ENCODE measurements at regions of chr16 and their contacts with region 1.

Region 1: GRCh38 chr16:46555951-46556350 is 65.2 kb downstream of the SHCBP1 start:
- DNase-seq: no peak
- H3K4me3 Mint-ChIP-seq: no peak overlapping the region
- H3K27ac Mint-ChIP-seq: no peak overlapping the region
- H3K4me1 Mint-ChIP-seq: no peaks in the 10 kb centered on the region
- H3K27me3 Mint-ChIP-seq: no peaks in the 10 kb centered on the region

Region 2: DNA sequence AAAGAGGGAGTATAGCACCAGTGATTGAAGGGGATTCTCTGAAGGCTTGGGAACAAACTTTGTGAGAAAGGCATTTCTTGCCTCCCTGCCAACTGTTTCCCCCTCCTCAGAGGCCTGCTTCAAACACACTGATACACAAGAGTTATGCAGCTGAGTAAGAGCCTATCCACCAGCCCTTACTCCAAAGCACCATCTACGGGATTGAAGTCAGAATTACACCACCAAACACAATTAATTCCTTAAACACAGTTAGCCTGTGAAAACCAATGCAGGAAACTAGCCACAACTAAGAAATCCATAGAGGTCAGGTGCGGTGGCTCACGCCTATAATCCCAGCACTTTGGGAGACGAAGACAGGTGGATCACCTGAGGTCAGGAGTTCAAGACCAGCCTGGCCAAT is 73.1 kb before region 1 on chr16:
- CTCF ChIA-PET with region 1: no interaction called
- DNase-seq: no peak
- H3K4me3 Mint-ChIP-seq: no peak overlapping the region
- H3K27ac Mint-ChIP-seq: no peak overlapping the region
- H3K4me1 Mint-ChIP-seq: no peaks in the 10 kb centered on the region
- H3K27me3 Mint-ChIP-seq: no peaks in the 10 kb centered on the region

Region 3: DNA sequence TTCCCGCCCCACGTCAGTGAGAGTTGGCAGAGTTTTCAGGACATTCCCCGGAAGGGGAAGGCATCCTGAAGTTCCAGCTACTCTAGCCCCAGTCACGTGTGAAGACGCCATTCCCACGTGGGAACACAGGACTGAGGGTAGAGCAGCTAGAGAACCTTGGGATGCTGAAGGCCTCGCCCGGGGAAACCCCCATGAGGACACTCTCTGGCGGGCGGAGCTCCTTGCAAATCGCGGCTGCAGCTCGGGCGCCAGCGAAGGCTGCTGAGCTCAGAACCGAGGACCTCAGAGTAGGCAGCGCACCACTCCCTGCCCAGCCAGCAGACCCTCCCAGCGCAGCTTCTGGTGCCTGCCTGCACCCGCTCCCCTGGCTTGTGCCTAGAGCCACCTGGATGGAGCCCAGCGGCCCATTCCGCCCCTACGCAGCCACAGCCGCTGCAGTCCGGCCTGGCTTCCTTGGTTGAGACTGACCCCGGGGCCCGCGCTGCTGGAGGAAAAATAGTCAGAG is 13.3 kb after region 1 on chr16:
- CTCF ChIA-PET with region 1: no interaction called
- DNase-seq: no peak
- H3K4me3 Mint-ChIP-seq: no peak overlapping the region
- H3K27ac Mint-ChIP-seq: no peak overlapping the region
- H3K4me1 Mint-ChIP-seq: peaks cover 2% of the 10 kb centered on the region
- H3K27me3 Mint-ChIP-seq: peaks cover 3% of the 10 kb centered on the region

Region 4: DNA sequence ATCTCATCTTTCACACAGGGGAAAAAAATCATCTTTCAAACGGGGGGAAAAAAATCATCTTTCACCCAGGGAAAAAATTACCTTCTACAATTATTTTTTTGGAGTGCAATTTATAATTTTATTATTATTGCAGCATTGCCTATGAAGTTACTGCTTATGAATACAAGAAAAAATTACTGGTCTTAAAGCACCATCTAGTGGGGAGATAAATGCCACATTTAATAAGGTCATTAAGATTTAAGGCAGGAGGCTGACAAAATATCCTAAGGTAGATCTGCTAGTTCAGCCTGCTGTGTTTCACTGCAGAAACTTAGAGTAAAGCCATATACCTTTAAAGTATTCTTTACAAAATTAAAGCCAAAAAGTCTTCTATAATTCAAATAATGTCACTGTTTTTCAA is 51.6 kb after region 1 on chr16:
- CTCF ChIA-PET with region 1: interaction called, 18 read pairs
- DNase-seq: no peak
- H3K4me3 Mint-ChIP-seq: no peak overlapping the region
- H3K27ac Mint-ChIP-seq: no peak overlapping the region
- H3K4me1 Mint-ChIP-seq: no peaks in the 10 kb centered on the region
- H3K27me3 Mint-ChIP-seq: no peaks in the 10 kb centered on the region